ENCODE measurements at regions of chr1 and their contacts with region 1.

Region 1: GRCh38 chr1:114660224-114660623 is 9.6 kb downstream of the DENND2C start:
- DNase-seq: no peak
- ATAC-seq: no peak
- H3K4me3 ChIP-seq: no peak overlapping the region
- H3K4me3 Mint-ChIP-seq: no peak overlapping the region
- H3K27ac ChIP-seq: no peak overlapping the region
- H3K27ac Mint-ChIP-seq: no peak overlapping the region
- H3K4me1 ChIP-seq: no peaks in the 10 kb centered on the region
- H3K4me1 Mint-ChIP-seq: no peaks in the 10 kb centered on the region
- H3K27me3 ChIP-seq: peaks cover 0 to 3% of the 10 kb centered on the region in 2 experiments
- H3K27me3 Mint-ChIP-seq: peaks cover 19 to 20% of the 10 kb centered on the region in 2 donors

Region 2: DNA sequence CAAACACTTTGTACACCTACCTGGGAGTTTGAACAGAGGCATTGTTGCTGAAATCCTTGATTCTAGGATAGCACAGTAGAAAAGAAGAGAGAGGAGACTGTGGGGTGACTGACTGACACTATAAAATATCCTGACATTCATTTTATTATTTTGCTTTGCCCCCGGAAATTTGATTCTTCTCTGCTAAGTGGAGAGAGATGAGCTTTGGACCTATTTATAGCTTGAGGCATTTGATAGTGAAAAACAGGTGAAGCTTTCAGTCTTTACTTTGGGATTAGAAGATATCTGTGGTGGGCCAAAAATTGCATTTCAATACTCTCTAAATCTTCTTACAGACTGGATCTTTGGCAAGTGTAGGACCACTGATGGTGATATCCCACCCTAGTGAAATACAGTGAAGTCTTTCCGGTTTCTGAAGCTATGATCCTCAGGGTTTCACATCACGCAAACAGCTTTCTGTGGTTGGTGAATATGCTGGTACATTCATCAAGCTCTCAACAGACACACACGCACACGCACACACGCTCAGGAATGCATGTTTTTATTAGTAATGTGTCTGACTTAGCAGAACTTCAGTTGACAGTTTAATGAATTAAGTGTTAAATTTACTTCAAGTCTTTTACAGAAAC is 35.3 kb after region 1 on chr1 and contains the start of gene AMPD1:
- CTCF ChIA-PET with region 1: no interaction called
- POLR2A ChIA-PET with region 1: interaction called in 1 of 2 experiments, 12 read pairs
- DNase-seq: no peak
- ATAC-seq: no peak
- H3K4me3 ChIP-seq: no peak within 1 kb of the TSS
- H3K4me3 Mint-ChIP-seq: no peak within 1 kb of the TSS
- H3K27ac ChIP-seq: no peak within 1 kb of the TSS
- H3K27ac Mint-ChIP-seq: no peak within 1 kb of the TSS
- H3K4me1 ChIP-seq: no peaks in the 10 kb centered on the region
- H3K4me1 Mint-ChIP-seq: no peaks in the 10 kb centered on the region
- H3K27me3 ChIP-seq: peaks cover 0 to 8% of the 10 kb centered on the region in 2 experiments
- H3K27me3 Mint-ChIP-seq: peaks cover 8 to 13% of the 10 kb centered on the region in 2 donors
- total RNA-seq, gene AMPD1: 0.33 TPM in 1 of 5 donors, not detected in the others